Ascending aorta (tissue), 2 donors: ENCODE measurements at regions of chr7 and their contacts with region 1.

Region 1: DNA sequence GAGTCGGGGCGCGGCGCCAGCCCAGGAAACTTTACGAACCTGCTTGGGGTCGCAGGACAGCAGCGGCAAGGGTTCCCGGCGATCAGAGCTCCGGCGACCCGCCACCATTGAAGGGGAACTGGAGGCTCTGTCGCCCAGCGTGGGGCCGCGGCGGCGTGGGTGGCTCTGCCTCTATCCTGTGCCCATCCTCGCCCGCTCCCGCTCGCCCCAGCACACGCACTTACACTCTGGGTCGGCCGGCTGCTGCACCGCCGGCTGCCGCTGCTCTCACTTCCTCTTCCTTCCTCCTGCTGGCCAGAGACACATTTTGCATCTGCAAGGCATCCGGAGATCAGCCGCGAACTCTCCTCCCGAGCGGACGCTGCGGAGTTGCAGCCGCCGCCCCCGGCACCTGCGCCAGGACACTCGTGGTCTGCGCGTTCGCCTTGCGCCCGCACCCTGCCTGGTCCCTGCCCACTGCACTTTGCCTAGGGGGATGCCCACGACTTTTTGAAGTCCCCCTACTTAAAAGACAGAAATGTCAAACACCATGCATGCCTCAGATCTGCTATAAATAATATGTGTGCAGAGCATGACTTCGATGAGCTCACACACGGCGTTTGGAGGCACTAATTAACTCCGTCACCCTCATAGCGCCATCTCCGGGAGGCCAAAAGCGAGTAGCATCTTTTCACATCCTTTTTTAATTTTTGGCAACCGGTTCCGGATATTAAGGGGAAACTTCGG is at the start of gene ELMO1:
- DNase-seq: peak; percentile 12 to 87
- H3K4me3 ChIP-seq: peak within 1 kb of the TSS; percentile 84 to 85
- H3K27ac ChIP-seq: peak within 1 kb of the TSS; percentile 75 to 85
- H3K4me1 ChIP-seq: peaks cover 0 to 3% of the 10 kb centered on the region in 2 donors
- H3K27me3 ChIP-seq: no peaks in the 10 kb centered on the region
- CTCF ChIP-seq: peak; percentile 30 to 46 (median 44)
- total RNA-seq, gene ELMO1: 40.8 TPM

Region 2: DNA sequence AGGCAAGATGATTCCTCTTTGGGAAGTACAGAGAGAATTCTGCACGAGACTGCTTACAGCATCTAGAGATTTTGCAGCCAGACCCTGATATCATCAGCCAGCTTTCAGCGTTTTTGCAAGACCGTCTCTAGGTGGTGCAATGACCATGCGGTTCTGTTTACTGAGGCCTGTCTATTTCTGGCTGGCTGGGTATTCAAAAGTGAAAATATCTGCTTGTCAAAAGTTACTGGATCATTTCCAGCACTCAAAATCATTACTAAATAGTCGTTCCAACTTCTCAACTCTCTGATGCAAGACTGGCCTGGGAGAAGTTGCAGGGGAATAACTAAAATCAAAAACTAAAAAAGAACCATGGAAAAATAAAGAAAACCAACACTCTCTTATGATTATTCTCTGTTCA is 240.3 kb before region 1 on chr7:
- intact Hi-C with region 1: loop called (anchors 10 kb)
- DNase-seq: peak in 1 of 2 donors; percentile 84
- H3K4me3 ChIP-seq: no peak overlapping the region
- H3K27ac ChIP-seq: peak overlapping the region; percentile 66 to 74
- H3K4me1 ChIP-seq: peaks cover 0 to 23% of the 10 kb centered on the region in 2 donors
- H3K27me3 ChIP-seq: no peaks in the 10 kb centered on the region
- CTCF ChIP-seq: peak in 2 of 3 experiments; percentile 26 to 48

Region 3: DNA sequence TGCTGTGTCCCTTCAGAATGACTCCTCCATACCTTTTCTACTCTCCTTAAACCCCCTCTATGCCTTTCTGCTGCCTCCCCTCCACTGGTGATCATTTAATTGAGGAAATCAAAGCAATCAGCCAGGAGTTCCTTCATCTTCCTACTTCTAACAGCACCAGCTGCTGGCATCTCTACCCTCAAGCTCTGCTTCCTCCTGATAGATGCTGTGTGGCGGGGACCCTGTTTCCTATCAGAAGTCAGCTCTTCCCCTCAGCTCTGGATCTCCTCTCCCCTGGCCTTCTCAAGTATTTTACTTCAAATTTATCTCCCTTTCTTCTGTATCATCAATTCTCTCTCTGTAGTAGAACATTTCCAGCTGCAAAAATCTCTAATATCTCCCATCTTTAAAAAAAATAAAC is 183.8 kb before region 1 on chr7:
- intact Hi-C with region 1: loop called (anchors 10 kb)
- DNase-seq: no peak
- H3K4me3 ChIP-seq: no peak overlapping the region
- H3K27ac ChIP-seq: no peak overlapping the region
- H3K4me1 ChIP-seq: no peaks in the 10 kb centered on the region
- H3K27me3 ChIP-seq: no peaks in the 10 kb centered on the region
- CTCF ChIP-seq: no peak

Region 4: DNA sequence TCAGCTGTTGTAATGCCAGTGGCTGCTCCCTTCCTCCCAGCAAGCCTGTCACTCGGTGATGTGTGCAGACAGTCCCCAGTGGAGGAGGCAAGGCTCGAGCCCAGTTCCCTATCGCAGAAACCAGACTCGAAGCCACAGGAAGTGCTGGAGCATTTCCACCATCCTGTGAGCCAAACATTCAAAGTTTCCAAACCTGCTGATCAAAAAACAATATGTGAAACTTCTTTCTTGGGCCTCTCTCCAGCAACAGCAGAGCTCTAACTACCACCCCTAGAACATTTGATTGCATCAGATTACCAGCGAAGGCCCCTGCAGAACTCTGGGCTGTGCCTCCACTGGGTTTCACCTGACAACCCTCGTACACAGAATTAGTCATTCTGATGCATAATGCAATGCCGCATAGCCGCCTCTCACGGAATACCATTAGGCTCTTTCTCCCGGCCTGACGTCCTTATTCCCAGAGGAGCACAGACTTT is 94.1 kb before region 1 on chr7:
- intact Hi-C with region 1: loop called (anchors 5 kb)
- DNase-seq: peak; percentile 68 to 90
- H3K4me3 ChIP-seq: peak overlapping the region in 1 of 2 donors; percentile 7
- H3K27ac ChIP-seq: peak overlapping the region; percentile 82
- H3K4me1 ChIP-seq: peaks cover 8 to 20% of the 10 kb centered on the region in 2 donors
- H3K27me3 ChIP-seq: no peaks in the 10 kb centered on the region
- CTCF ChIP-seq: no peak

Region 5: GRCh38 chr7:38232502-38233366 is 783.9 kb after region 1 on chr7:
- intact Hi-C with region 1: no loop called
- DNase-seq: peak; percentile 10 to 64
- H3K4me3 ChIP-seq: no peak overlapping the region
- H3K27ac ChIP-seq: no peak overlapping the region
- H3K4me1 ChIP-seq: no peaks in the 10 kb centered on the region
- H3K27me3 ChIP-seq: no peaks in the 10 kb centered on the region
- CTCF ChIP-seq: no peak